Endothelial cell of umbilical vein (primary cell): ENCODE measurements at regions of chr13 and their contacts with region 1.

Region 1: DNA sequence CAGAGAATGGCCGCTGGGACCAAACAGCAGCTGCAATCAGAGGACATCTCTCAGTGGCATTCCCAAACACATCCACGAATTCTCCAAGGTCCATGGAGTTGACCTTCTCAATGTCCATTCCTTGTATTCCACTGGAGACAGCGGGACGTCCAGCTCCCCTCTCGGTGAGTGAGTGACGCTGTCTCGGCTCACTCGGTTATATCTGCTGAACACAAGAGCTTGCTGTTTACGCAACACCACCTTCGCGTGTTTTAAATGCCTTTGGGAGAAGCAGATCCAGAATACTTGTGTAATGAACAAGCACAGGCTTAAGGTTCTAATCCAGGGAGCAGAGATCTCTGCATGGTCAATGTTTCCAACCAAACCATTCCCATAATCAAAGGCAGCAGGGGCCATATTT is at the start of gene URAD:
- DNase-seq: no peak
- H3K4me3 ChIP-seq: no peak within 1 kb of the TSS
- H3K27ac ChIP-seq: no peak within 1 kb of the TSS
- H3K4me1 ChIP-seq: no peaks in the 10 kb centered on the region
- H3K27me3 ChIP-seq: peaks cover 12 to 13% of the 10 kb centered on the region in 2 experiments
- CTCF ChIP-seq: no peak
- POLR2A ChIP-seq: no peak
- total RNA-seq, gene URAD: not detected in 2 replicates

Region 2: GRCh38 chr13:27650312-27650711 is 338.2 kb before region 1 on chr13:
- CTCF ChIA-PET with region 1: no interaction called
- POLR2A ChIA-PET with region 1: no interaction called
- dilution Hi-C with region 1: no loop called
- intact Hi-C with region 1: no loop called
- DNase-seq: no peak
- H3K4me3 ChIP-seq: no peak overlapping the region
- H3K27ac ChIP-seq: no peak overlapping the region
- H3K4me1 ChIP-seq: no peaks in the 10 kb centered on the region
- H3K27me3 ChIP-seq: no peaks in the 10 kb centered on the region
- CTCF ChIP-seq: no peak
- POLR2A ChIP-seq: no peak

Region 3: GRCh38 chr13:27765650-27766049 is 222.9 kb before region 1 on chr13:
- CTCF ChIA-PET with region 1: no interaction called
- POLR2A ChIA-PET with region 1: no interaction called
- dilution Hi-C with region 1: no loop called
- intact Hi-C with region 1: no loop called
- DNase-seq: no peak
- H3K4me3 ChIP-seq: no peak overlapping the region
- H3K27ac ChIP-seq: no peak overlapping the region
- H3K4me1 ChIP-seq: no peaks in the 10 kb centered on the region
- H3K27me3 ChIP-seq: peaks cover 0 to 8% of the 10 kb centered on the region in 2 experiments
- CTCF ChIP-seq: no peak
- POLR2A ChIP-seq: no peak

Region 4: GRCh38 chr13:27868641-27869435 is 119.7 kb before region 1 on chr13:
- CTCF ChIA-PET with region 1: interaction called, 29 read pairs
- POLR2A ChIA-PET with region 1: no interaction called
- dilution Hi-C with region 1: no loop called
- intact Hi-C with region 1: loop called (anchors 1 kb)
- DNase-seq: peak; percentile 29
- H3K4me3 ChIP-seq: no peak overlapping the region
- H3K27ac ChIP-seq: no peak overlapping the region
- H3K4me1 ChIP-seq: no peaks in the 10 kb centered on the region
- H3K27me3 ChIP-seq: peaks cover 2 to 16% of the 10 kb centered on the region in 2 experiments
- CTCF ChIP-seq: peak; percentile 28 to 37
- POLR2A ChIP-seq: no peak